CD14-positive monocyte (primary cell): ENCODE measurements at regions of chr2 and their contacts with region 1.

Region 1: DNA sequence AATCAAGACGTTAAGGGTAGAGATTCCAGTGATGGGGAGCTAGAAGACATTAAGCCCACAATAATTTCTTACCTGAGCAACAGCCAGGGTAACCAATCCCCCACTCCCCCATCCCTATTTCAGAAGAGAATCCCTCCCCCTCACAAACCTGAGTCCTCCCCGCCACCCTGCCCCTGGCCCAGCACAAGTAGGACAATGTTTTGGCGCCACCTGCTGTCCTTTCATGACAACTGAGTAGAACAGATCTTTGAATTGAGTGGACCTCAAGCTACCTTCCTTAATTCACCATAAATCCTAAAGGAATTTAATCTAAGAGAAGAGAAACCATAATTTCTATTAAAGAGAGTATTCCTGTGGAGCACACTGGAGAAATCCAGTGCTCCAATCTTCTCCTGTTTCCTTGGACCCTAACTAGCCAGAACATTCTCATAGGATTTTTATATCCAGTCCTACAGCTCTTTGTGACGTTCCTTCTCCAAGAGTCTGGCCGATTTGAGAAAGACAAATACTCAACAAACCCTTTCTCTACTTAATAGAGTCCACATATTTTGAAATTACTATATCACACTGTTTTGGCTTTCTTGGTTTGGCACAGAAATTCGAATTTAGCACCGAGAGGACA is 41.1 kb downstream of the NHEJ1 start:
- DNase-seq: peak; percentile 21 to 53 (median 32)
- H3K4me3 ChIP-seq: no peak overlapping the region
- H3K4me3 Mint-ChIP-seq: no peak overlapping the region
- H3K27ac ChIP-seq: no peak overlapping the region
- H3K27ac Mint-ChIP-seq: peak overlapping the region in 1 of 7 donors; percentile 59
- H3K4me1 ChIP-seq: peaks cover 8 to 9% of the 10 kb centered on the region in 2 donors
- H3K4me1 Mint-ChIP-seq: peaks cover 16% of the 10 kb centered on the region
- H3K27me3 ChIP-seq: no peaks in the 10 kb centered on the region
- H3K27me3 Mint-ChIP-seq: peaks cover 0 to 2% (median 0%) of the 10 kb centered on the region in 3 donors
- CTCF ChIP-seq: peak; percentile 77

Region 2: DNA sequence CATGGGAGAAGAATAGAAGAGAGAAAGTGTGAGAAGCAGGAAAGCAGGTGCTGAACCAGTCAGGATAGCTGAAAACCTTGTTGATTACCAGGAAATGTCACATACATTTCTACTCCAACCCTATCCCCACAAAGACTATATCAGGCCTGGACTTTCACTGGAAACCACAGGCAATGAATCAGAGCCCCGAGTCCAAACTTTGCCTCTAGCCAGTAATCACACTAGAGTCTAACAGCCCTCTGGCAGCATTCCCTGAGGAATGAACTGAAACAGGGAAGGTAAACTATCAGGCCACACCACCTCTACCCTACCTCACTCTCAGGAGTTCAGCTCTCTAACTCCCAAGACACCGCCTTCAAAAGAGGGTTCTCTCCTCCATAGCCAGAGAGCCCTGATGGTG is 40.1 kb before region 1 on chr2:
- intact Hi-C with region 1: loop called in 1 of 2 experiments (anchors 5 kb)
- DNase-seq: no peak
- H3K4me3 ChIP-seq: no peak overlapping the region
- H3K4me3 Mint-ChIP-seq: no peak overlapping the region
- H3K27ac ChIP-seq: no peak overlapping the region
- H3K27ac Mint-ChIP-seq: peak overlapping the region in 1 of 7 donors; percentile 75
- H3K4me1 ChIP-seq: peaks cover 30 to 34% of the 10 kb centered on the region in 2 donors
- H3K4me1 Mint-ChIP-seq: peaks cover 45% of the 10 kb centered on the region
- H3K27me3 ChIP-seq: no peaks in the 10 kb centered on the region
- H3K27me3 Mint-ChIP-seq: peaks cover 0 to 3% (median 0%) of the 10 kb centered on the region in 3 donors
- CTCF ChIP-seq: no peak

Region 3: GRCh38 chr2:219274392-219274921 is 154.9 kb after region 1 on chr2:
- intact Hi-C with region 1: no loop called
- DNase-seq: no peak
- H3K4me3 ChIP-seq: no peak overlapping the region
- H3K4me3 Mint-ChIP-seq: no peak overlapping the region
- H3K27ac ChIP-seq: no peak overlapping the region
- H3K27ac Mint-ChIP-seq: no peak overlapping the region
- H3K4me1 ChIP-seq: peaks cover 14 to 17% of the 10 kb centered on the region in 2 donors
- H3K4me1 Mint-ChIP-seq: peaks cover 17% of the 10 kb centered on the region
- H3K27me3 ChIP-seq: no peaks in the 10 kb centered on the region
- H3K27me3 Mint-ChIP-seq: peaks cover 14 to 23% (median 15%) of the 10 kb centered on the region in 3 donors
- CTCF ChIP-seq: no peak